ENCODE measurements at regions of chr4 and their contacts with region 1.

Region 1: GRCh38 chr4:76055016-76055415 is 19.1 kb upstream of the CXCL11 start:
- DNase-seq: peak; percentile 54
- ATAC-seq: peak; percentile 83
- H3K4me3 Mint-ChIP-seq: no peak overlapping the region
- H3K27ac Mint-ChIP-seq: no peak overlapping the region
- H3K4me1 Mint-ChIP-seq: peaks cover 44% of the 10 kb centered on the region
- H3K27me3 Mint-ChIP-seq: peaks cover 23% of the 10 kb centered on the region

Region 2: GRCh38 chr4:75514131-75514948 is 540.7 kb before region 1 on chr4 and contains the starts of genes RCHY1 and THAP6:
- CTCF ChIA-PET with region 1: no interaction called
- POLR2A ChIA-PET with region 1: no interaction called
- intact Hi-C with region 1: loop called in 1 of 2 experiments (anchors 10 kb)
- DNase-seq: peak; percentile 95
- ATAC-seq: peak; percentile 93
- H3K4me3 Mint-ChIP-seq: no peak within 1 kb of the TSS
- H3K27ac Mint-ChIP-seq: peak within 1 kb of the TSS; percentile 95
- H3K4me1 Mint-ChIP-seq: peaks cover 39% of the 10 kb centered on the region
- H3K27me3 Mint-ChIP-seq: no peaks in the 10 kb centered on the region
- total RNA-seq, gene RCHY1: 32.9 to 33.7 TPM
- total RNA-seq, gene THAP6: 18.4 TPM

Region 3: DNA sequence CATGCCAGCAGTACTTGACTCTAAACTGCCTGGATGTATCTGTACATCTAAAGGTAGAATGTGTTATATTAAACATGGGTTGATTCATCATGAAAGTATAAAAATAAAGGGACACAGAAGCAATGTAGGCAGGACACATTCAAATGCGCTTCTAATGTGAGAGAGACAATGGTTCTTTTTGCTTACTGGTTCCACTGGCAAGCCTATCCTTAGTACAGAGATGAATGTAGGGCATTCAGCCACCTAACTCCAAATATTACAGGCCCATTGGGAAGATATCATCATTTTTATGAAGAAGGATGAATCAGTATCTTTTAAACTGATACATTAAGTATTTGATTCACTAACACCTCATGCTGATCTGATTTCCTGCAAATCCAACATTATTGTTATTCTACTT is 442.7 kb before region 1 on chr4:
- CTCF ChIA-PET with region 1: no interaction called
- POLR2A ChIA-PET with region 1: no interaction called
- intact Hi-C with region 1: no loop called
- DNase-seq: no peak
- ATAC-seq: no peak
- H3K4me3 Mint-ChIP-seq: no peak overlapping the region
- H3K27ac Mint-ChIP-seq: no peak overlapping the region
- H3K4me1 Mint-ChIP-seq: no peaks in the 10 kb centered on the region
- H3K27me3 Mint-ChIP-seq: no peaks in the 10 kb centered on the region

Region 4: GRCh38 chr4:75715105-75715799 is 339.8 kb before region 1 on chr4:
- CTCF ChIA-PET with region 1: no interaction called
- POLR2A ChIA-PET with region 1: no interaction called
- intact Hi-C with region 1: no loop called
- DNase-seq: no peak
- ATAC-seq: peak; percentile 47
- H3K4me3 Mint-ChIP-seq: no peak overlapping the region
- H3K27ac Mint-ChIP-seq: no peak overlapping the region
- H3K4me1 Mint-ChIP-seq: peaks cover 9% of the 10 kb centered on the region
- H3K27me3 Mint-ChIP-seq: no peaks in the 10 kb centered on the region

Region 5: GRCh38 chr4:76028350-76028765 is 26.7 kb before region 1 on chr4:
- CTCF ChIA-PET with region 1: interaction called, 7 read pairs
- POLR2A ChIA-PET with region 1: interaction called, 6 read pairs
- intact Hi-C with region 1: loop called (anchors 1 kb)
- DNase-seq: no peak
- ATAC-seq: no peak
- H3K4me3 Mint-ChIP-seq: peak overlapping the region; percentile 31
- H3K27ac Mint-ChIP-seq: peak overlapping the region; percentile 11
- H3K4me1 Mint-ChIP-seq: peaks cover 27% of the 10 kb centered on the region
- H3K27me3 Mint-ChIP-seq: peaks cover 8% of the 10 kb centered on the region

Region 6: DNA sequence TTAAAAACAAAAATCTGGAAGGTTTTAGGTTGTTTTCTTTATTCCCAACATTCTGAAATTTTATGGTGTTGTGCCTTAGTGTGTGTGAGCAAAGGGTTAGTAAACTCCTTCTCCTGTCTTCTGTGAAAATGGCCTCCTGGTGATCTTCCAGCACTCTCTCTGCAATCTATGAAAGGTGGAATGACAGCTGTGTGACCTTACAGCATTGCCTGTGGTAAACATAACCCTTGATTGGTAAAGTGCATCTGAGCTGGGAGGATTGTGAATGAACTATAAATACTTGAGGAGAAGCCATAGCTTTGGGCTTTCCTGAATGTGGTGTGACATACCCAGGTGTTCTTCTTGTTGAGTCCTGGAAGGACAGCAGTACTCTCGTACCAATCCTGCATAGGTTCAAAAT is 29.5 kb after region 1 on chr4:
- CTCF ChIA-PET with region 1: no interaction called
- POLR2A ChIA-PET with region 1: no interaction called
- intact Hi-C with region 1: no loop called
- DNase-seq: no peak
- ATAC-seq: no peak
- H3K4me3 Mint-ChIP-seq: no peak overlapping the region
- H3K27ac Mint-ChIP-seq: no peak overlapping the region
- H3K4me1 Mint-ChIP-seq: no peaks in the 10 kb centered on the region
- H3K27me3 Mint-ChIP-seq: peaks cover 10% of the 10 kb centered on the region

Region 7: GRCh38 chr4:76213415-76214176 is 158.6 kb after region 1 on chr4 and contains the start of gene SCARB2:
- CTCF ChIA-PET with region 1: no interaction called
- POLR2A ChIA-PET with region 1: no interaction called
- intact Hi-C with region 1: loop called in 1 of 2 experiments (anchors 5 kb)
- DNase-seq: peak; percentile 79
- ATAC-seq: peak; percentile 68
- H3K4me3 Mint-ChIP-seq: peak within 1 kb of the TSS; percentile 75
- H3K27ac Mint-ChIP-seq: peak within 1 kb of the TSS; percentile 78
- H3K4me1 Mint-ChIP-seq: peaks cover 32% of the 10 kb centered on the region
- H3K27me3 Mint-ChIP-seq: no peaks in the 10 kb centered on the region
- total RNA-seq, gene SCARB2: 3.3 to 4.6 TPM

Region 8: GRCh38 chr4:76949276-76950051 is 894.4 kb after region 1 on chr4 and contains the start of gene SEPTIN11:
- CTCF ChIA-PET with region 1: no interaction called
- POLR2A ChIA-PET with region 1: no interaction called
- intact Hi-C with region 1: loop called in 1 of 2 experiments (anchors 10 kb)
- DNase-seq: peak; percentile 86
- ATAC-seq: peak; percentile 72
- H3K4me3 Mint-ChIP-seq: peak within 1 kb of the TSS; percentile 83
- H3K27ac Mint-ChIP-seq: peak within 1 kb of the TSS; percentile 49
- H3K4me1 Mint-ChIP-seq: peaks cover 13% of the 10 kb centered on the region
- H3K27me3 Mint-ChIP-seq: peaks cover 22% of the 10 kb centered on the region
- total RNA-seq, gene SEPTIN11: 15.5 to 34.5 TPM